Transverse colon (tissue), 4 donors: ENCODE measurements at regions of chr2 and their contacts with region 1.

Region 1: DNA sequence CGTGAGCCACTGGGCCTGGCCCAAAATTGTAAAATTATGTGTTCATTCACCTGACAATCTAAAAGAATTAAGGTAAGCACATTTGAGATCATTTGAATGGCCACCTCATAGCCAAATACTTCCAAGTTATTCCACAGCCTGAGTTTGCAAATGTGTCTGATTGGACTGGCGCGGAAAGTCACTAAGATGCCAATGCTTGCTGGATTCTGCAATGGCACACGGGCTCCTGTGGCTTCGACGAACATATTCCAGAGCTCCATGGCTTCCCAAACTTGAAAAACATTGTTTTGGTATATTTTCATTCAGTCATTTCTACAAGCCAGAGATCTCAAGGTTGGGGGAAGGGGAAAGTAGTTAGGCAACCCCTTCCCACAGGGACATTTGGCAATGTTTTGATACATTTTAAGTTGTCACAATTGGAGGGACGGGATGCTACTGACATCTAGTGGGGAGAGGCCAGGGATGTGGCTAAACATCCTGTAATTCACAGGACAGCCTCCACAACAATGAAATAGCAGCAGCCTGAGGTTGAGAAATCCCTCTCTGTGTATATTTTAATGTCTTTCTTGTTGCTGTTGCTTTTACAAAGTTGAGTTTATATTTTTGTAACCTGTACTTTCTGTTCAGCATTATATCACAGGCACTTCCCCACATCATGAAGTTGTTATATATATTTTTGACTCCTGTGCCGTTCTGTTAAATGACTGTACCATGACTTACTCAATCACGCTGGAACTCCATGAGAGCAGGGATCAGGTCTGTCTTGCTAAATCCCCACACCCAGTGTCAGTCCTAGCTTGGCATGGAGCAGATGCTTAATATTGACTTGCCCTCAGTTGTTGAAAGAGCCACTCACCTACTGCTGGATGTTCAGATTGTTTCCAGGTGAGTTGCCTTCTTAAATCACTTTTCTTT is 56.9 kb downstream of the COL4A4 start:
- DNase-seq: peak; percentile 53
- H3K4me3 ChIP-seq: no peak overlapping the region
- H3K27ac ChIP-seq: no peak overlapping the region
- H3K4me1 ChIP-seq: peaks cover 0 to 3% (median 0%) of the 10 kb centered on the region in 4 donors
- H3K27me3 ChIP-seq: no peaks in the 10 kb centered on the region
- CTCF ChIP-seq: peak; percentile 63 to 68 (median 67)
- EP300 ChIP-seq: no peak
- POLR2A ChIP-seq: no peak

Region 2: GRCh38 chr2:226600184-226600583 is 506.9 kb before region 1 on chr2:
- in situ Hi-C with region 1: no loop called
- intact Hi-C with region 1: no loop called
- DNase-seq: no peak
- H3K4me3 ChIP-seq: no peak overlapping the region
- H3K27ac ChIP-seq: no peak overlapping the region
- H3K4me1 ChIP-seq: no peaks in the 10 kb centered on the region
- H3K27me3 ChIP-seq: no peaks in the 10 kb centered on the region
- CTCF ChIP-seq: no peak
- EP300 ChIP-seq: no peak
- POLR2A ChIP-seq: no peak

Region 3: DNA sequence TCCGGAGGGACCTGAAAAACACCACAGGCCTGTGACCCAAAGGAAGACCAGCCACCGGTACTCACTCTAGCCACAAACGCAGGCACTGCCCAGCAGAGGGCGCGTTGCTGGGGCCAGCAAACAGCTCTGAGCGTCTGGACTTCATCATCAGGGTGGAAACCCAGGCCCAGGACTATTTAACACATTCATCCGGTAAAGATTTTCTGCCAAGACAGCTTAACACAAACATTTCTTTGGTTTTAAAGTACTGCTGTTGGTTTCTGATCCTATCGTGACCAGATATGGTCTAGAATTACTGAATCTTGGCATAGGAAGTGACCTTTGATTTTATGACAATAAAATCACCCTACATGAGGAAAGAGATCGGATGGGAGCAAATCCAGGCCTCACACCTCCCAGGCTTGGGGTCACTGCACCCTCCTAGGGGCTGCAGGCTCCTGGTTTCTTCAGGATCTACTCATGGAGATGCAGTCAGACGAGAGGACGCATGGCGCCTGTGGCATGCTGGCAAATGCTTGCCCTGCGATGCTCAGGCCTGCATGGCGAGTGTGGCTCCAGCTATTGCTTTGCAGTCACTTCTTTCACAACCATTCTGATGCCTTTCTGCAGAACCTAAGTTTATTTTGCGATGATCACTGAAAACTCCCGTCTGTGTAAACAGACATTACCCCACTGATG is 73.5 kb before region 1 on chr2:
- in situ Hi-C with region 1: no loop called
- intact Hi-C with region 1: loop called (anchors 10 kb)
- DNase-seq: peak; percentile 59
- H3K4me3 ChIP-seq: no peak overlapping the region
- H3K27ac ChIP-seq: peak overlapping the region in 3 of 4 donors; percentile 31 to 71 (median 32)
- H3K4me1 ChIP-seq: peaks cover 5 to 26% (median 14%) of the 10 kb centered on the region in 4 donors
- H3K27me3 ChIP-seq: no peaks in the 10 kb centered on the region
- CTCF ChIP-seq: peak; percentile 52 to 63 (median 61)
- EP300 ChIP-seq: no peak
- POLR2A ChIP-seq: no peak